ENCODE measurements at regions of chr3 and their contacts with region 1.

Region 1: DNA sequence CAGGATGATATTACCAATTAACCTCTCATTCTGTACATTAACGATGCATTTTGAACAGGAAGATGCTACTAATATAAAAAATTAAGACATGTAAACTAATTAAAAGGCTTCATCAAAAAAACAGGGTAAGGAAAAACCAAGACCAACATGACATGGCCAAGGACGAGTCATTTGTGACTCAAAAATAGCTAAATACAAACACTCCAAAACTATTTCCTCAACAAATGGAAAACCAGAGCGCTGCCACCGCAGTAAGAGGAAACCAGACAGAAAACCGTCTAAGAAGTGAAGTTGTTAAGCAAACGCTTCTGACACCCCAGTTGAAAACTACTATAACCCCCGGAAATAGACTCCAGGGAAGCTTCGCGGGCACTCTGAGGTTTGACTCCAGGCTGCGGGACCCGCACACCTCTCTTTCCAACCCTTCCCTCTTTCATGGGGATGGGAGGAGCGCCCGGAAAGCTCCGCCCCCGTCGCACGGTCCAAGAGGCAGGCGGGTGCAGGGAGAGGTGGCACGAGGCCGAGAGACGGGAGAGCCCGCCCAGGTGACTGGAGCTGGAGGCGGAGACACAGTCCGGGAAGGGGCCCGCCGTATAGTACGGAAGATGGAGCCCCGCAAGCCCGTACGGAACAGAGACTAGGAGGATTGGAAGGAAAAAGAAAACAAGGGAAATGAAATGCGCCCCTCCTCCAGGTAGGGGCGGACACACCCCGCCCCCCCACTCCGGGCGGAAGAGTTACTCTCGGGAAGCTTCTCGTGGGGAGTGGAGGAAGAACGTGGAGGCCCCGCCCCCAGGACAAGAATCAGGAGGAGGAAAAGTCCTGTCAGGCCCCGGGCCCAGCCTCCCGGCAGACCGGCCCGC is 708 bp downstream of the DCAF1 start:
- DNase-seq: peak; percentile 86 to 98
- H3K4me3 ChIP-seq: peak overlapping the region; percentile 88 to 95
- H3K27ac ChIP-seq: peak overlapping the region; percentile 98 to 99
- H3K4me1 ChIP-seq: peaks cover 0 to 3% of the 10 kb centered on the region in 2 donors
- H3K27me3 ChIP-seq: no peaks in the 10 kb centered on the region
- CTCF ChIP-seq: no peak

Region 2: GRCh38 chr3:51353691-51354090 is 145.4 kb before region 1 on chr3:
- intact Hi-C with region 1: no loop called
- DNase-seq: no peak
- H3K4me3 ChIP-seq: no peak overlapping the region
- H3K27ac ChIP-seq: no peak overlapping the region
- H3K4me1 ChIP-seq: no peaks in the 10 kb centered on the region
- H3K27me3 ChIP-seq: no peaks in the 10 kb centered on the region
- CTCF ChIP-seq: no peak

Region 3: DNA sequence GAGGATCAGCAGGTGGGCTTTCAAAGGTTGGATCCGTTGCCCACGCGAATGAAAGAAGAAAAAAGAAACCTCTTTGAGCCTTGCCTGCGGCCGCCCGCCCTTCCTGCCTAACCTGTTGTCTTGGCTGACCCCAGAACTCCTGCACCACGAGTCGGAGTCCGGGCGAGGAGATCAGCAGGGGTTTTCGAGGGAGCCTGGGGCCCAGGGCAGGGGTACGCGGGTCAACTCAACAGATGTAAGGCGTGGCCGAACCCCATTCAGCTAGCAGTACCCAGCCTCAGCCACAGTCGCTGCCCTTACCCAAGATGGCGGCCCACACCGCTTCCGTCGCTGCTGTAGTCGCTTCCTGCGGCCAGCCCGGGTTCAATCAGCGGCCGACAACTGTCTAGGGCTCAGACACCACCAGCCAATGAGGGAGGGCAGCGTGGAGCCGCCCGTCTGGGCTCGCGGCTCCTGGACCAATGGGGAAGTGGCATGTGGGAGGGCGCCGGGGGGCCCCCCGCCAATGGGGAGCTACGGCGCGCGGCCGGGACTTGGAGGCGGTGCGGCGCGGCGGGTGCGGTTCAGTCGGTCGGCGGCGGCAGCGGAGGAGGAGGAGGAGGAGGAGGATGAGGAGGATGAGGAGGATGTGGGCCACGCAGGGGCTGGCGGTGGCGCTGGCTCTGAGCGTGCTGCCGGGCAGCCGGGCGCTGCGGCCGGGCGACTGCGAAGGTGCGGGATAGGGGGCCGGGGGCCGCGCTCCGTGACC is 114.2 kb before region 1 on chr3 and contains the start of gene MANF:
- intact Hi-C with region 1: loop called (anchors 1 kb)
- DNase-seq: peak; percentile 97 to 99
- H3K4me3 ChIP-seq: peak within 1 kb of the TSS; percentile 92
- H3K27ac ChIP-seq: peak within 1 kb of the TSS; percentile 92 to 98
- H3K4me1 ChIP-seq: peaks cover 5 to 28% of the 10 kb centered on the region in 2 donors
- H3K27me3 ChIP-seq: no peaks in the 10 kb centered on the region
- CTCF ChIP-seq: peak in 1 of 3 experiments; percentile 37
- total RNA-seq, gene MANF: 34.4 TPM

Region 4: DNA sequence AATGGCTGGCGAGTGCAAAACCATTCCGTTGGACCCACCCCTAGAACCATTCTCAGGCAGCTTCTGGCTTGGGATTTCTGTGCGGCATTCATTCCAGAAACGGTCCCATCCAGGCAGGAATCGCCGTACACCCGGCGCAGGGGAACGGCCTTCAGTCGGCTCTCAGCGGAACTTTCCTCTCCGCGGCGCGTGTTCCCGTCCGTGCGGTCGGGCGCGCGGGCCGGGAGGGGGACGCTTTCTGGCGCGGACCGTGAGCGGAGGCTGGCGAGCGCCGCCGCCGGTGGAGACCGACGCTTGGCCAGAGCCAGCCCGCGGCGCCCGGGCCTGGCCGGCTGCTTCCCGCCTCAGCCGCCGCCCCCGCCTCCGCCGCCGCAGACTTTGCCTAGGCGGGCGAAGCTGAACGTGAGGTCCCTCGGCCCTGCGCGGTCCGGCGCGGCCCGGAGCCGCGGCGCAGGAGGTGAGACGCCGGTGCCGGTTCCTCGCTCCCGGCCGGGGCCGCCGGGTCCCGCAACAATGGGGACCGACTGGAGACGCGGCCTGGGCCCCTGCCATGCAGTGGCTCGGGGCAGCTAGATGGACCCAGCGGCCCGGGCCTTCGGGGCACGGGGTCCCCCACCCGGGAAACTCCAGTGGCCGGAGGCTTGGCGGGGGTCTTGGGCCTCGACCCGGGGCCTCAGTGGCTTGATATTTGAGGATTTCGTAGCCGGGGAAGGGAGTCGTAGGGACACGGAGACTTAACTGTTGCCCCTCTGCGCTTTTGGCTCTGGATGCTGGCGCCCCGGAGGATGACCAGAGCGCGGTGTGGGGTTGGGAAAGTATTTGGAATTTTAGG is 39.6 kb after region 1 on chr3 and contains the start of gene RAD54L2:
- intact Hi-C with region 1: loop called (anchors 2 kb)
- DNase-seq: peak; percentile 11 to 88
- H3K4me3 ChIP-seq: peak within 1 kb of the TSS; percentile 83 to 99
- H3K27ac ChIP-seq: peak within 1 kb of the TSS; percentile 90 to 93
- H3K4me1 ChIP-seq: peaks cover 0 to 16% of the 10 kb centered on the region in 2 donors
- H3K27me3 ChIP-seq: no peaks in the 10 kb centered on the region
- CTCF ChIP-seq: peak in 2 of 3 experiments; percentile 10 to 38
- total RNA-seq, gene RAD54L2: 18.3 TPM

Region 5: GRCh38 chr3:51642462-51642861 is 143.4 kb after region 1 on chr3:
- intact Hi-C with region 1: no loop called
- DNase-seq: no peak
- H3K4me3 ChIP-seq: no peak overlapping the region
- H3K27ac ChIP-seq: no peak overlapping the region
- H3K4me1 ChIP-seq: no peaks in the 10 kb centered on the region
- H3K27me3 ChIP-seq: no peaks in the 10 kb centered on the region
- CTCF ChIP-seq: no peak

Region 6: DNA sequence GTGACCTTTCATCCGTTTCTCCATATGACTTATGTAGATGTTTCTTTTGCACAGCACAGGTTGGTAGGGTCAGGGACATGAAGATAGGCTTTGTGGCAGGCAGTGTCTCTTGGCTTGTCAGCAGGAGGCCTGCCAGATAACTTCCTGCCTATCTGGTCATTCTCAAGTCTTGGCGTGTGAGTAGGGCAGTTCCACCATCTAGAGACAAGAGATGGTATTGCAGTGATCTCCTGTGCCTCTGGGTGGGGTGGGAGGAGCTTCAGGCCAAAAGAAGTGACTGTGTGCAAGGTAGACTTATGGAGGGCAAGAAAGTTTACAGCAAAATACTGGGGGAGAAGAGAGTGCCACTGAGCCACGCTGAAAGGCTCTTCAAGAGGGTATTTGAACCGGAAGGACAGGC is 183.0 kb after region 1 on chr3:
- intact Hi-C with region 1: loop called (anchors 1 kb)
- DNase-seq: peak in 1 of 2 donors; percentile 76
- H3K4me3 ChIP-seq: no peak overlapping the region
- H3K27ac ChIP-seq: no peak overlapping the region
- H3K4me1 ChIP-seq: peaks cover 0 to 3% of the 10 kb centered on the region in 2 donors
- H3K27me3 ChIP-seq: no peaks in the 10 kb centered on the region
- CTCF ChIP-seq: peak; percentile 47 to 58 (median 49)

Measured in ascending aorta (tissue), 2 donors.